CD4-positive, alpha-beta memory T cell (primary cell): ENCODE measurements at regions of chr1 and their contacts with region 1.

Region 1: GRCh38 chr1:111030590-111030989 is 66.9 kb upstream of the LRIF1 start:
- DNase-seq: peak; percentile 54 to 62 (median 59)
- H3K4me3 ChIP-seq: no peak overlapping the region
- H3K4me3 Mint-ChIP-seq: no peak overlapping the region
- H3K27ac ChIP-seq: no peak overlapping the region
- H3K27ac Mint-ChIP-seq: no peak overlapping the region
- H3K4me1 ChIP-seq: no peaks in the 10 kb centered on the region
- H3K4me1 Mint-ChIP-seq: no peaks in the 10 kb centered on the region
- H3K27me3 ChIP-seq: no peaks in the 10 kb centered on the region
- H3K27me3 Mint-ChIP-seq: peaks cover 5 to 12% of the 10 kb centered on the region in 2 donors

Region 2: DNA sequence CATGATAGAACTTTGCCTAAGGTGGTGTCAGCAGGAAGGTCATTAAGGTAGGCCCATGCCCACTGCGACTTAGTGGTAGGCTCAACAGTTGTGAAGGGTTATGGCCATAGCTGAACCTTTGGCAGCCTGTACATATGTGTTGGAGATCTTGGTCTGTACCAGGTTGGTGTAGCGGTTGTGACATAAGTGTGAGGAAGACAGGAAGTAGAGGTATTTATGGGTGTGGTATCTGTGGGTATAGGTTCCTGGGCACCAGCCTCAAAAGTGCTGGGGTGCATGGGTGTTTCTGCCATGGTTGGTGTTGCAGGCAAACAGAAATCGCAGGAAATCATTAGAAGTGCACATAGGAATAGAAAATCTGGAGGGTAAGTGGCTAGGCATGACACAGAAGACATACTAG is 48.3 kb before region 1 on chr1:
- CTCF ChIA-PET with region 1: no interaction called
- POLR2A ChIA-PET with region 1: no interaction called
- intact Hi-C with region 1: no loop called
- DNase-seq: peak; percentile 9 to 43 (median 25)
- H3K4me3 ChIP-seq: no peak overlapping the region
- H3K4me3 Mint-ChIP-seq: peak overlapping the region in 6 of 8 donors; percentile 2 to 51 (median 37)
- H3K27ac ChIP-seq: no peak overlapping the region
- H3K27ac Mint-ChIP-seq: peak overlapping the region in 3 of 7 donors; percentile 19 to 59 (median 19)
- H3K4me1 ChIP-seq: peaks cover 14% of the 10 kb centered on the region
- H3K4me1 Mint-ChIP-seq: peaks cover 11 to 15% (median 12%) of the 10 kb centered on the region in 4 donors
- H3K27me3 ChIP-seq: no peaks in the 10 kb centered on the region
- H3K27me3 Mint-ChIP-seq: peaks cover 11 to 17% of the 10 kb centered on the region in 2 donors

Region 3: DNA sequence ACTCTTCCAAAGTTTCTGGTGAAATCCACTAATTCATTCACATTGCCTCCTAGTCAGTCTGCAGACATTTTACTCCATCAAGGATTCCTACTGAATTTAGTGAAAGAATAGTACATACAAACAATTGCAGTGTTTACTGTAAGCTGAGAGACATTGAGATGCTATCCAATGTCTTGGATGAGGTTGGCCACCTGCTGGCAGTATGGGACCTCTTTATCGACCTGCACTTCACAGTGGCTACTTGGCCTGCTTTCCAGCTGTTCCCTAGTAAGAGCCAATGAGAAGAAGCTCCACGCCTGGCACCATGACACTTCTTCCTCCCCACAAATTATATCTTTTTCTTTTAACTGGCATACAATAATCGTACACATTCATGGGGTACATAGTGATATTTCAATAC is 15.4 kb before region 1 on chr1:
- CTCF ChIA-PET with region 1: interaction called, 11 read pairs
- POLR2A ChIA-PET with region 1: no interaction called
- intact Hi-C with region 1: no loop called
- DNase-seq: no peak
- H3K4me3 ChIP-seq: no peak overlapping the region
- H3K4me3 Mint-ChIP-seq: no peak overlapping the region
- H3K27ac ChIP-seq: no peak overlapping the region
- H3K27ac Mint-ChIP-seq: no peak overlapping the region
- H3K4me1 ChIP-seq: no peaks in the 10 kb centered on the region
- H3K4me1 Mint-ChIP-seq: no peaks in the 10 kb centered on the region
- H3K27me3 ChIP-seq: peaks cover 8% of the 10 kb centered on the region
- H3K27me3 Mint-ChIP-seq: peaks cover 20 to 25% of the 10 kb centered on the region in 2 donors

Region 4: DNA sequence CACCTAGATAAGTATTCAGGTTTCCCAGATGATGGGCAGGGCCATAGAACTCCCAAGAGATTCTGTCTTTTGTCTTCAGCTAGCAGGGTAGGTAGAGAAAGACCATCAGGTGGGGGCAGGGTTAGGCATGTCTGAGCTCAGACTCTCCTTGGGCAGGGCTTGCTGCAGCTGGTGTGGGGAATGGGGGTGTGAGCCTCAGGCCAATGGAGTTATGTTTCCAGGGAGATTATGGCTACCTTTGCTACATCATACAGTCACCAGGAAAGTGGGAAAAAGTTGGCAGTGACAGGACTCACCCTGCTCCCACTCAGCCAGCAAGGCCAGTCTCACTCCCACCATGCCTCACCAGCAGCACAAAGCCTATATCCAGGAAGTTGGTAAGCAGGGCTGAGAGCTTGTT is 31.5 kb after region 1 on chr1:
- CTCF ChIA-PET with region 1: interaction called, 20 read pairs
- POLR2A ChIA-PET with region 1: no interaction called
- intact Hi-C with region 1: no loop called
- DNase-seq: no peak
- H3K4me3 ChIP-seq: no peak overlapping the region
- H3K4me3 Mint-ChIP-seq: no peak overlapping the region
- H3K27ac ChIP-seq: no peak overlapping the region
- H3K27ac Mint-ChIP-seq: no peak overlapping the region
- H3K4me1 ChIP-seq: no peaks in the 10 kb centered on the region
- H3K4me1 Mint-ChIP-seq: no peaks in the 10 kb centered on the region
- H3K27me3 ChIP-seq: no peaks in the 10 kb centered on the region
- H3K27me3 Mint-ChIP-seq: peaks cover 9 to 23% of the 10 kb centered on the region in 2 donors

Region 5: DNA sequence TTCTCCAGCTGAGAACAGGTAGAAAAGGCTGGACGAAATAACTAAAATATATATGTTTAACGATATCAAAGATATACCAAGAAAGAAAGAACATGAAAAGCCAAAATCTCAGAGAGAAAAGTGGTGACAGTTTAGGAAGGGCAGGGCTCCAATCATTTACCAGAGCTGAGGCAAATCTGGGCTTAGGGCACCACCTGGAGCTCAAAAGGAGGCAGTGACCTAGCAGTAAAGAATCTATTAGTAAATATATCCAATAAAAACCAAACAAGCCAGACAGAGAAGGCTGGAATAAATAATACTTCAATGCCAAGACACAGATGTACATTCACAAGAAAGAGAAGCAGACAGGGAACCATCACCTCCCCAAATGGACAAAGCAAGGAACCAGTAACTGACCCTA is 303.6 kb after region 1 on chr1:
- CTCF ChIA-PET with region 1: interaction called, 56 read pairs
- POLR2A ChIA-PET with region 1: no interaction called
- intact Hi-C with region 1: loop called (anchors 1 kb)
- DNase-seq: peak; percentile 49 to 69 (median 68)
- H3K4me3 ChIP-seq: no peak overlapping the region
- H3K4me3 Mint-ChIP-seq: peak overlapping the region in 2 of 8 donors; percentile 24 to 45
- H3K27ac ChIP-seq: no peak overlapping the region
- H3K27ac Mint-ChIP-seq: peak overlapping the region in 3 of 7 donors; percentile 1 to 74 (median 3)
- H3K4me1 ChIP-seq: peaks cover 7% of the 10 kb centered on the region
- H3K4me1 Mint-ChIP-seq: peaks cover 2 to 12% (median 4%) of the 10 kb centered on the region in 4 donors
- H3K27me3 ChIP-seq: no peaks in the 10 kb centered on the region
- H3K27me3 Mint-ChIP-seq: no peaks in the 10 kb centered on the region

Region 6: DNA sequence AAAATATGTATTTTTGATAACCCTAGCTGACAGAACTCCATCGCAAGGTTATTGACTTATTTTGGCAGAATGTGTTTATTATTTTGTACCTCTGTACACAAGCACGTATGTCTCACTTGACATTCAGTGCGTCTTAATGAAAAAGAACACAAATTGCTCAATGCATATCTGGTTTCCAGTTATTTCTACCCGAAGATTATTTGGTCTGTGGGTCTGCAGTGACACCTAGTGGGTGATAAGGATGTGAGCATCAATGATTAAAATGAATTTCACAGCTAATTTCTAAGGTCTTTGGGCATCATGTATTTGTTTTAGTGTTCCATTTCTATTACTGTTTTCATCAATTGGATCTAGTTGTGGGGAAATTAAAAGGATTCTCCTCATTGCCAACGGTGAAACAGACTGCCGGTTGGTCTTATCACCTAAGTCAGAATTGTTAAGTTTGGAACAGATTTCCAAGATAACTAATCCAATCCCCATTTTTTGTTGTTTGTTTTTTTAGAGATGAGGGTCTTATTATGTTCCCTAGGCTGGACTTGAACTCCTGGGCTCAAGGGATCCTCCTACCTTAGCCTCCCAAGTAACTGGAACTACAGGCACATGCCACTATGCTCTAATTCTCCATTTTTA is 739.0 kb after region 1 on chr1:
- CTCF ChIA-PET with region 1: interaction called, 5 read pairs
- POLR2A ChIA-PET with region 1: no interaction called
- intact Hi-C with region 1: loop called (anchors 1 kb)
- DNase-seq: peak; percentile 54 to 64 (median 59)
- H3K4me3 ChIP-seq: no peak overlapping the region
- H3K4me3 Mint-ChIP-seq: no peak overlapping the region
- H3K27ac ChIP-seq: no peak overlapping the region
- H3K27ac Mint-ChIP-seq: peak overlapping the region in 5 of 7 donors; percentile 7 to 55 (median 38)
- H3K4me1 ChIP-seq: no peaks in the 10 kb centered on the region
- H3K4me1 Mint-ChIP-seq: peaks cover 0 to 3% (median under 1%) of the 10 kb centered on the region in 4 donors
- H3K27me3 ChIP-seq: no peaks in the 10 kb centered on the region
- H3K27me3 Mint-ChIP-seq: no peaks in the 10 kb centered on the region